Dendritic cell treated with granulocyte-macrophage colony-stimulating factor and Interleukin-4, amounts not matched to agents 40 ng/mL and 50 ng/mL, for 4 days (primary cell): ENCODE measurements at regions of chr12 and their contacts with region 1.

Region 1: DNA sequence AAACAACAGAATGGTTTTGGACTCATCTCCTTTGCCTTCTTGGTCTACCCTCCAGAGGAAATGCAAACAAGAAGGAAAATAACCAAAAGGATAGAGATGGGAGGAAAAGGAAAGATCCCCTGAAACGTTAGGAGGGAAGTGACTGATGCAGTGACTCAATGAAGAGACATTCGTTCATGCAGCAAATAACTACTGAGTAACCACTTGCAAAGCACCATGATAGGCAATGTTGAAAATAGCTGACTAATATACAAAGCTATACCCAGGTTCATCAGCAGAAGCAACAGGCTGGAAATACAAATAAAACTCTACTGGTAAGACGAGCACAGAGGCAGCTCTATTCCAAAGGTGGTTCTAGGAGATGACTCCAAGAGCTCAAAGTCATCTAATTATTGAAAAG is 41.8 kb downstream of the R3HDM2 start:
- H3K4me3 Mint-ChIP-seq: no peak overlapping the region
- H3K27ac Mint-ChIP-seq: no peak overlapping the region
- H3K4me1 Mint-ChIP-seq: peaks cover 5% of the 10 kb centered on the region
- H3K27me3 Mint-ChIP-seq: no peaks in the 10 kb centered on the region

Region 2: DNA sequence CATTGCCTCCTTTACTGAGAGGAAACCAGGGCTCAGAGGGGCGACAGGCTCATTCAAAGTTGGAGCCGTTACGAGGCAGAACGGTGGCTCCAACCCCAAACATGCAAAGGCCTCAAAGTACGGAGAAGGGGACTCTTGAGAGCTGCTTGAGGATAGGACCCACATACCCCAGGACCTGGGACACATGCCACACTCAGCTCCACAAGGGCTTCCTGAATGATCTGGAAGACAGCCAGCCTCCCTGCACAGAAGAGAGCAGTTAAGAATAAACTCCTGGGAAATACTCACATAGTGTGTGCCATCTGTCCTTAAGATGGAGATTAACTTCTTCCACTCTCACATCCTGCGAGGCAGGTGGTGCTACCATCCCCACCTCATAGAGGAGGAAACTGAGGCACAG is 199.0 kb before region 1 on chr12:
- intact Hi-C with region 1: loop called (anchors 10 kb)
- H3K4me3 Mint-ChIP-seq: no peak overlapping the region
- H3K27ac Mint-ChIP-seq: no peak overlapping the region
- H3K4me1 Mint-ChIP-seq: no peaks in the 10 kb centered on the region
- H3K27me3 Mint-ChIP-seq: no peaks in the 10 kb centered on the region